ENCODE measurements at regions of chr11 and their contacts with region 1.

Region 1: DNA sequence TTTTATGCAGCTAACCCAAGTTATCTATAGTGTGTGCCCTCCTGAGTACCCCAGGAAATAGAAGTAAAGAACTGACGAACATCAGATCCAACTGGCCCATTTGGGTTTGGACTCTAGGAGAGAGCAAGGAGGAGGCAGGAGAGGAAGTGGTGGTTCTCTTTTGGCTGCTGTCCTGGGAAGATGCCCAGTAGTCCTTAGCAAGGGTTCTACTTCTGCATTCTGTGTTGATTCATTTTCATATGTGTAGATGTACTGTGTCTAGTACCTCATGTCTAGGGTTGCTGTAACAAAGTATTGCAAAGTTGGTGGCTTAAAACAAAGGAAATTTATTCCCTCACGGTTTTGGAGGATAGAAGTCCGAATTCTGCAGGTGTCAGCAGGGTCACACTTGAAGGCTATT is 6.6 kb upstream of the MMP27 start:
- DNase-seq: no peak

Region 2: DNA sequence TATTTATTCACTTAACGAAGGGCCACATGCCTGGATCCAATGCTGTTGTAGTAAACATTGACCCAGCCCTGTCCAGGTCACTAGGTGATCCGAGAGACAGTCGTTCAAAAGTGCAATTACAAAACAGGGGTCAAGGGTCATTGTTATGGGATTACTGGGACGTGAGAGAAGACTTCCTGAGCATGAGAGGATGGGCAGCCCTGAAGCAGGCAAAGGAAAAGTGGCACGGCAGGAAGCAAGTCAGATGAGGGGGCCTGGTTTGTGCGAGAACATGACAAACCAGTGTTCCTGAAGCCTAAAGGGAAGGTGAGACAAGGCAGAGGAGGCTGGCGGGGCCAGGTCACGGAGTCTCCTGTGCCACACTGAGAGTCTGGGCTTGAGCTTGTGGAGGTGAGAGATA is 71.2 kb before region 1 on chr11:
- in situ Hi-C with region 1: no loop called
- DNase-seq: no peak

Region 3: GRCh38 chr11:102780491-102780918 is 68.4 kb after region 1 on chr11 and contains the start of gene MMP10:
- in situ Hi-C with region 1: loop called (anchors 5 kb)
- DNase-seq: no peak
- total RNA-seq, gene MMP10: 42.3 and 45.3 TPM in 2 replicates

Region 4: DNA sequence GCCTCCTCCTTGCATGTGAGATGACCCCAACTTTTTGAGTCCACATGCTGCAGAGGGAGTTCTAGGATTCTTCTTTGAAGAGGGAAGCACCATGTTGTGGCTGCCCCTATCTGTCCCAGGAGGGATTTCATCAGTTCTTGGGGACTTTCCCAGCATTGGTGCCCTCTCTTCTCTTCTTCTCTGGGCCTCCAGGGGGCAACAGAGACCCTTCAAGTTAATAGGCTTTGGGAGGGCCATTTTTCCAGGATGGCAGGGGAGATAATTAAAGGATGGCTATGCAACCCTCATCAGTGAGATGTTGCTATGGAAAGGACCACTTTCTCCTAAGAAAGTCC is 82.3 kb after region 1 on chr11:
- in situ Hi-C with region 1: no loop called
- DNase-seq: peak; percentile 5

Region 5: DNA sequence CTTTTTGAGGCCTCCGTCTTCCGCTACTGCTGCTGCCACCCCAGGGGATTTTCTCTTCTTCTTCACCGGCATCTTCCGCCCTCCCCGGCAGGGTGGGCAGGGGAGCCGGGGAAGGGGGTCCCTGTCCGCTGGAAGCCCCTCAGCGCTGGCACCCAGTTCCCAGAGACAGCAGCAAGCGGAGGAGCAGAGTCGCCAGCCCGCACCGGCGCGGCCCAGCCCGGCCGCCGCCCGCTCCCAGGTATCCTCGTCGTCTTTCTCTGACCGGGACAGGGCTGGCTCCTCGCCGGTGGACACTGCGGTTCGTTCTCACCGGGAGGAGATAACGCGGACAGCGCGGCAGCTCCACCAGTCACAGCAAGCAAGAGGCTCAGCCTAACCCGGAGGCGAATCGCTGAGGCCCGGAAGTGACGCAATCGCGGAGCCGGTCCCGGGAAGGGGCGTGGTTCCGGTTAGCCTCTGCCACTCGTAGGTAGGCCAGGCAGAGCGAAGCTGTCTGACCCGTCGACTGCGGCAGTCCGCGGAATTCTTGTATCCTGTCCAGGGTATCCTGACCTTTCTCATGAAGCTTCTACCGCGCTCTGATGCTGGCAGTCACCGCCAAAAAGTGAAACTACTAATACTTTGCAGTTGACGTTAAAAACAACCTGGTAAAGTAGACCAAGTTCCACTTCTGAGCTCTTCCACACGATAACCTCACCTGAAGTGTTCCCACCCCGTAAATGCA is 379.8 kb after region 1 on chr11 and contains the start of gene DCUN1D5:
- in situ Hi-C with region 1: no loop called
- DNase-seq: peak; percentile 97
- total RNA-seq, gene DCUN1D5: 114 and 136 TPM in 2 replicates